Naive thymus-derived CD4-positive, alpha-beta T cell (primary cell): ENCODE measurements at regions of chr4 and their contacts with region 1.

Region 1: GRCh38 chr4:17614416-17615299 is at the start of gene MED28:
- DNase-seq: peak; percentile 91 to 96 (median 94)
- ATAC-seq: peak; percentile 97
- H3K4me3 ChIP-seq: peak within 1 kb of the TSS; percentile 100
- H3K4me3 Mint-ChIP-seq: peak within 1 kb of the TSS; percentile 86 to 100 (median 96)
- H3K27ac ChIP-seq: peak within 1 kb of the TSS; percentile 94
- H3K27ac Mint-ChIP-seq: peak within 1 kb of the TSS; percentile 92 to 99 (median 97)
- H3K4me1 ChIP-seq: peaks cover 19 to 31% of the 10 kb centered on the region in 2 donors
- H3K4me1 Mint-ChIP-seq: peaks cover 23 to 58% (median 45%) of the 10 kb centered on the region in 7 donors
- H3K27me3 ChIP-seq: no peaks in the 10 kb centered on the region
- H3K27me3 Mint-ChIP-seq: no peaks in the 10 kb centered on the region
- total RNA-seq, gene MED28: 50.1 to 82.1 (median 55.7) TPM

Region 2: GRCh38 chr4:17511950-17512795 is 102.5 kb before region 1 on chr4 and contains the start of gene QDPR:
- CTCF ChIA-PET with region 1: no interaction called
- POLR2A ChIA-PET with region 1: no interaction called
- intact Hi-C with region 1: loop called (anchors 1 to 2 kb)
- DNase-seq: peak; percentile 55 to 81 (median 70)
- ATAC-seq: peak; percentile 95
- H3K4me3 ChIP-seq: peak within 1 kb of the TSS; percentile 94
- H3K4me3 Mint-ChIP-seq: peak within 1 kb of the TSS; percentile 86 to 100 (median 96)
- H3K27ac ChIP-seq: peak within 1 kb of the TSS; percentile 69
- H3K27ac Mint-ChIP-seq: peak within 1 kb of the TSS; percentile 83 to 96 (median 85)
- H3K4me1 ChIP-seq: peaks cover 9 to 10% of the 10 kb centered on the region in 2 donors
- H3K4me1 Mint-ChIP-seq: peaks cover 18 to 42% (median 34%) of the 10 kb centered on the region in 7 donors
- H3K27me3 ChIP-seq: no peaks in the 10 kb centered on the region
- H3K27me3 Mint-ChIP-seq: peaks cover 0 to 18% (median 6%) of the 10 kb centered on the region in 5 donors
- total RNA-seq, gene QDPR: 11.8 to 27.7 (median 23.1) TPM

Region 3: GRCh38 chr4:17576932-17577665 is 37.6 kb before region 1 on chr4 and contains the start of gene LAP3:
- CTCF ChIA-PET with region 1: interaction called, 3 read pairs
- POLR2A ChIA-PET with region 1: interaction called, 17 read pairs
- intact Hi-C with region 1: loop called (anchors 1 kb)
- DNase-seq: peak; percentile 97 to 100 (median 99)
- ATAC-seq: peak; percentile 94
- H3K4me3 ChIP-seq: peak within 1 kb of the TSS; percentile 77
- H3K4me3 Mint-ChIP-seq: peak within 1 kb of the TSS; percentile 78 to 96 (median 92)
- H3K27ac ChIP-seq: peak within 1 kb of the TSS; percentile 96
- H3K27ac Mint-ChIP-seq: peak within 1 kb of the TSS; percentile 92 to 100 (median 97)
- H3K4me1 ChIP-seq: peaks cover 4 to 11% of the 10 kb centered on the region in 2 donors
- H3K4me1 Mint-ChIP-seq: peaks cover 20 to 47% (median 24%) of the 10 kb centered on the region in 7 donors
- H3K27me3 ChIP-seq: no peaks in the 10 kb centered on the region
- H3K27me3 Mint-ChIP-seq: peaks cover 0 to 2% (median 0%) of the 10 kb centered on the region in 5 donors
- total RNA-seq, gene LAP3: 25.2 to 142 (median 54.9) TPM

Region 4: DNA sequence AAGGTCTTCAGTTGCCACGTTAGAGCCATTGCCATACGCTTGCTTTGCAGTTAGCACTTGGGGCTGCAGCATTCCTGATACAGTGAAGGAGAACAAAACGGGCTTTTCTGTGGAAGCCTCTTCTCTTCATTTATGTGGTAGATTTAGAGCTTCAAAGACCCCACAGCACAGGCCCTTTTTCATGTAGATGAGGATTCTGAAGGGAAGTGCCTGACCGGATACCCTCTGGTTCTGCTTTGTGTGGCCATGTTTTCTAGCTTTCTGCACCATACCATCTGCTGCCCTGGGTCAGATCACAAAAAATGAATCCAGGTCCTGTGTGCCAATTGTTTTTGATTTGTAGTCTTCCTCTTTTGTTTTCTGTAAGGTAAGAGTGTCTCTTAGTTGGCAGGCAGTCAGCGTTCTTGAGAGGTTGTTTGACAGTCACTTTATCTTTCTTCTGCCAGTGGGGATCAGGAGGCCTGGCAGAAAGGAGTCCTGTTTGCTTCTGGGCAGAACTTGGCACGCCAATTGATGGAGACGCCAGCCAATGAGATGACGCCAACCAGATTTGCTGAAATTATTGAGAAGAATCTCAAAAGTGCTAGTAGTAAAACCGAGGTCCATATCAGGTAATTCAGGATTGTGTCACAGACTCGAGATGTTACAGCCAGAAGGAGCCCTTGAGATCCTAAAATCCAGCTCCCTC is 30.0 kb before region 1 on chr4:
- CTCF ChIA-PET with region 1: no interaction called
- POLR2A ChIA-PET with region 1: interaction called, 10 read pairs
- intact Hi-C with region 1: no loop called
- DNase-seq: no peak
- ATAC-seq: no peak
- H3K4me3 ChIP-seq: no peak overlapping the region
- H3K4me3 Mint-ChIP-seq: no peak overlapping the region
- H3K27ac ChIP-seq: no peak overlapping the region
- H3K27ac Mint-ChIP-seq: peak overlapping the region in 3 of 9 donors; percentile 21 to 31 (median 25)
- H3K4me1 ChIP-seq: no peaks in the 10 kb centered on the region
- H3K4me1 Mint-ChIP-seq: peaks cover 5 to 37% (median 6%) of the 10 kb centered on the region in 7 donors
- H3K27me3 ChIP-seq: no peaks in the 10 kb centered on the region
- H3K27me3 Mint-ChIP-seq: no peaks in the 10 kb centered on the region

Region 5: DNA sequence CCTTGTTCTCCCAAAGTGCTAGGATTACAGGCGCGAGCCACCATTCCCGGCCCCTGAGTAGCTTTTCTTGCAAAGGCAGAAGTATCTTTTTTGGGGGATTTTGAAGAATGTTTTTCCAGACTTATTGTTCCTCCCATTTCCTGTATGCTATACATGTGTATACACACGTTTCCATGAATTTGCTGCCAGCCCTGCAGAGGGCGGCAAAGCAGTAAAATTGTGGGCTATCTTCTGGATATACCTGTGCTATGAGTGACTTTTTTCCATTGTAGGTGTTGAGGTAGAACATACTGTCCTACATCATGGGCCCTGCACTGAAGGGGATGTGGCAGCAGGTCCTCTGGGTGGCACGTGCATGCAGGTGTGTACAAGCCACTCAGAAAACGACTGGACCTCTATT is 17.1 kb before region 1 on chr4:
- CTCF ChIA-PET with region 1: interaction called, 4 read pairs
- POLR2A ChIA-PET with region 1: interaction called, 4 read pairs
- intact Hi-C with region 1: loop called (anchors 1 to 2 kb)
- DNase-seq: no peak
- ATAC-seq: no peak
- H3K4me3 ChIP-seq: no peak overlapping the region
- H3K4me3 Mint-ChIP-seq: no peak overlapping the region
- H3K27ac ChIP-seq: no peak overlapping the region
- H3K27ac Mint-ChIP-seq: peak overlapping the region in 1 of 9 donors; percentile 19
- H3K4me1 ChIP-seq: no peaks in the 10 kb centered on the region
- H3K4me1 Mint-ChIP-seq: peaks cover 0 to 12% (median 0%) of the 10 kb centered on the region in 7 donors
- H3K27me3 ChIP-seq: no peaks in the 10 kb centered on the region
- H3K27me3 Mint-ChIP-seq: no peaks in the 10 kb centered on the region

Region 6: GRCh38 chr4:17650406-17650805 is 35.7 kb after region 1 on chr4:
- CTCF ChIA-PET with region 1: no interaction called
- POLR2A ChIA-PET with region 1: interaction called, 3 read pairs
- intact Hi-C with region 1: loop called in 1 of 2 experiments (anchors 5 kb)
- DNase-seq: no peak
- ATAC-seq: no peak
- H3K4me3 ChIP-seq: no peak overlapping the region
- H3K4me3 Mint-ChIP-seq: peak overlapping the region in 3 of 10 donors; percentile 9 to 51 (median 46)
- H3K27ac ChIP-seq: no peak overlapping the region
- H3K27ac Mint-ChIP-seq: peak overlapping the region in 3 of 9 donors; percentile 10 to 63 (median 45)
- H3K4me1 ChIP-seq: peaks cover 0 to 19% of the 10 kb centered on the region in 2 donors
- H3K4me1 Mint-ChIP-seq: peaks cover 7 to 36% (median 23%) of the 10 kb centered on the region in 7 donors
- H3K27me3 ChIP-seq: no peaks in the 10 kb centered on the region
- H3K27me3 Mint-ChIP-seq: no peaks in the 10 kb centered on the region